Activated CD4-positive, alpha-beta T cell treated with anti-CD3 and anti-CD28 coated beads, Interleukin-2, amount 10 ng/mL, durations not matched to agents 24 days and 14 days (primary cell): ENCODE measurements at regions of chr9 and their contacts with region 1.

Region 1: DNA sequence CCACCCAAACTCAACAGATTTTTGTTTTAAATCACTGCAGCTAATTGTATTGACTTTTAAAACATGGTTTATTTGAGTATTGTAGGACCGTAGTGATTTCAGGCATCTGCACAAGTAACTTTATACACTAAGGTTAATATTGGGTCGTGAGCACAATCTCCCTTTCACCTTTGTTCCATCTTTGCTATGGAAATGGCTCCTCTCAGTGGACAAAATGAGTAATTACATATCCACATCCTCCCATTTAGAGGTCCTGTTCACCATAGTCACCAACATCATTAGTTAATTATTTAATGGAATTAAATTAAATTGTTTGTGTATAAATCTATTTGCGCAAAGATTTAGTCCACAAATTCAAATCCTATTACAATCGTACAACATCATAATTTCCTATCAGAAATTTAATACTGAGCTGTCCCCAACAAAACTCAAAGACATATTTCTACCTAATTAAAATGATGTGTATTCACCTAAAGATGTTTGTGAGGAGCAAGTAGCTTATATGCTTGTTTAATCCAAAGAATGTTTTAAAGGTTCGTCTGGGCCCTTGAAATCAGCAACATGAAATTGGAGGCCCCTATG is 173.0 kb upstream of the DAPK1 start:
- DNase-seq: peak; percentile 63
- H3K4me3 Mint-ChIP-seq: no peak overlapping the region
- H3K27ac Mint-ChIP-seq: no peak overlapping the region
- H3K4me1 Mint-ChIP-seq: no peaks in the 10 kb centered on the region
- H3K27me3 Mint-ChIP-seq: no peaks in the 10 kb centered on the region

Region 2: DNA sequence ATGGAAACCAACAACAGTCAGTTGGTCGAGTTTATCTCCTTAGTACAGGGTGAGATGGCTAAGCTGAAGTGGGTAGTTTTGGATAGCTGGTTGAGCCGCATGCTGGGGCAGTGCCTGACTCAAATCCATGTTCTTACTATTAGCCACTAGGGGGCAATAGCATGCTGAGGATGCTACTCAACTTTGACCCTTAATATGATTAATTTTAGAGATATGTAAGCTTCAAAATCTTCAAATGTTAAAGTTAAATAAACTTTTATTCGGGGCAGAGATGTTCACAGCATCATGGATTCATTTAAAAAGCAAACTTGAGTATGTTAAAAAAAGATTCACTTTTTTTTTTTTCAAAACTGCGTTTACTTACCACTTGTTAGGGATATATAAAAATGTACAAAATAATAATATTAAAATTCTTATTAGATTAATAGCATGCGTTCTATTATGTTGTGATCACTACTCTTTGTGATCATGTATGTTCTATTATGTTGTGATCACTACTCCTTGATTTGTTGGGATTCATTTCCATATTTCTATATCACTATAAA is 1122.3 kb before region 1 on chr9:
- intact Hi-C with region 1: loop called (anchors 2 kb)
- DNase-seq: peak; percentile 68
- H3K4me3 Mint-ChIP-seq: no peak overlapping the region
- H3K27ac Mint-ChIP-seq: no peak overlapping the region
- H3K4me1 Mint-ChIP-seq: no peaks in the 10 kb centered on the region
- H3K27me3 Mint-ChIP-seq: peaks cover 17% of the 10 kb centered on the region

Region 3: DNA sequence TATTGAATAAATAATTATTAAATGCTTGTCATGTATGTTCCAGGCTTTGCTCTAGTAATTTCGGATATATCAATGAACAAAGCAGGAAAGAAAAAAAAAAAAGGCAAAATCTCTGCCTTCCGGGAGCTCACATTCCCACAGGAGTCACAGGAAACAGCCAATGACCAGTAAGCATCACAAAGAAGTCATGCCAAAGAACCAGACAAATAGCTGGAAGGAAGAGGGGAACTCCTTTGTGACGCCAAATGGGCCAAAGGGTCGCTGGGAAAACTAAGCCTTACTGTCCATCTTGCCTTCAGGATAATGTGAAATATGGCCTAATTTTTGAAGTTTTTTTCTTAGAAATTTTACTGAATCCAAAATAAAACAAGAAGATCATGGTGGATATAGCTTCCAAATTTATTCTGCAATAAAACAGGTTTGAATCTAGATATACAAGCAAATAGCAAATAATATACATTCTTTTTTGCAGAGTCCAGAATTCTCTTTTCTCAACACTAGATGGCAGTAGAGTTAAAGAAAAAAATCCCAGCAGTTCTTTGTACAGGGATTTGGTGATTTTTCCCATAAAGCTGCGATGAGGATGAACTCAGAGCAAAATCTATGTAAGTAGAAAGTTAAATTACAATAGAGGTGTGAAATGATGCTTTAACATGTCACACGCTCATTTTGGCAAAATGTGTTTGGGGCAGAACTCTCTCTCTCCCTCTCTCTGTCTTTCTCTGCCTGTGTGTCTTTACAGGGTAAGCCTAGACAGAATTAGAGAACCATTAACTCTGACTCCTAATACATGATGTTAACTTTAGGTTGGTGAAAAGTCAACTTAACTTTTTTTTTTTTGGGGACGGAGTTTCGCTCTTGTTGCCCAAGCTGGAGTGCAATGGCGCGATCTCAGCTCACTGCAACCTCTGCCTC is 910.5 kb before region 1 on chr9:
- intact Hi-C with region 1: loop called (anchors 1 kb)
- DNase-seq: peak; percentile 34
- H3K4me3 Mint-ChIP-seq: no peak overlapping the region
- H3K27ac Mint-ChIP-seq: no peak overlapping the region
- H3K4me1 Mint-ChIP-seq: no peaks in the 10 kb centered on the region
- H3K27me3 Mint-ChIP-seq: peaks cover 13% of the 10 kb centered on the region

Region 4: GRCh38 chr9:86434039-86434726 is 890.5 kb before region 1 on chr9:
- intact Hi-C with region 1: loop called (anchors 1 kb)
- DNase-seq: peak; percentile 62
- H3K4me3 Mint-ChIP-seq: no peak overlapping the region
- H3K27ac Mint-ChIP-seq: no peak overlapping the region
- H3K4me1 Mint-ChIP-seq: no peaks in the 10 kb centered on the region
- H3K27me3 Mint-ChIP-seq: peaks cover 11% of the 10 kb centered on the region

Region 5: GRCh38 chr9:86486891-86487837 is 837.5 kb before region 1 on chr9:
- intact Hi-C with region 1: loop called (anchors 2 kb)
- DNase-seq: no peak
- H3K4me3 Mint-ChIP-seq: no peak overlapping the region
- H3K27ac Mint-ChIP-seq: no peak overlapping the region
- H3K4me1 Mint-ChIP-seq: peaks cover 7% of the 10 kb centered on the region
- H3K27me3 Mint-ChIP-seq: no peaks in the 10 kb centered on the region